ENCODE measurements at regions of chr11 and their contacts with region 1.

Region 1: DNA sequence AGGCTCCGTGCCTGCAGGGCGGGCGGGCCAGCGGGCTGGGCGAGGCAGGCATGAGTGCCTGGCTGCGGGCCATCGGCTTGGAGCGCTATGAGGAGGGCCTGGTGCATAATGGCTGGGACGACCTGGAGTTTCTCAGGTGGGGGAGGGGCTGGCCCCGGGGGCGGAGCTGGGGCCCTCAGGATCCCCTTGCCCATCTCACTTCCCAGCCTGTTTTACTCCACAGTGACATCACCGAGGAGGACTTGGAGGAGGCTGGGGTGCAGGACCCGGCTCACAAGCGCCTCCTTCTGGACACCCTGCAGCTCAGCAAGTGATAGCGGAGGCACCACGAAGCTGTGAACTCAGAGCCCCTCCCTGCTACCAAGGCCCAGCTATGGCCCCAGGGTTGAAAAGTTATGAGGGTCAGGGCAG is 5.9 kb downstream of the PHOX2A start:
- DNase-seq: peak; percentile 58
- ATAC-seq: peak; percentile 55
- H3K4me3 Mint-ChIP-seq: no peak overlapping the region
- H3K27ac Mint-ChIP-seq: no peak overlapping the region
- H3K4me1 Mint-ChIP-seq: peaks cover 20% of the 10 kb centered on the region
- H3K27me3 Mint-ChIP-seq: peaks cover 35% of the 10 kb centered on the region

Region 2: DNA sequence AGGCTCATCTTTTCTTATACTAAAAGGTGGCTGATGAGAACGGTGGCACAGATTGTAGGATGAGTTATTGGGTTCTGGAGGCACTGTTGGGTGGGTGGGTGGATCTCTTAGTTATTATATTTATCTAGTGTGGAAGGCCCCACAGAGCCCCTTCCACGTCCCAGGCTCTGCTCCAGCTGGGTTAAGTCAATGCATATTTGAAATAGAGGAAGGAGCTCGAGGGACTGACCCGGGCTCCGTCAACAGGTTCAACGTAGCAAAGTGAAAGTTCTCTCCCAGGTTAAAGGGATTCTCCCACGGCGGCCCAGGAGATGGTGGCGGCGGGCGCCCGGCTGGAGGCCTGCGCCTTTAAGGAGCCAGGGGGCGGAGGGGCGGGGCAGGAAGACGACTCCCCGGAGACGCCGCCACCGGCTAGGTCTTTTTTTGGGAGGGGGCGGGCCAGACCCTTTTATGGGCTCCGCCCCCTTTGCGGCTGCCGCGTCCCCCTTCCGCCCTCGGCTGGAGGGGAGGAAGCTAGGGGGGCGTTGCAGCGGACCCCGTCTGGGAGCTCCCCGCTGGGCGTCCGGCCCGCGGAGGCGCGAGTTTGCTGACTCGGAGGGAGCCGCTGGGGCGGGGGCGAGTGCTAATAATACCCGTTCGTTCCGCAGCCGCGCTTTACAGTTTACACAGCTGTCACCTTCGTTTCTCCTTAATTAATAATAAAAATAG is 15.0 kb before region 1 on chr11:
- CTCF ChIA-PET with region 1: interaction called, 21 read pairs
- POLR2A ChIA-PET with region 1: interaction called, 7 read pairs
- DNase-seq: peak; percentile 96
- ATAC-seq: peak; percentile 80
- H3K4me3 Mint-ChIP-seq: peak overlapping the region; percentile 85
- H3K27ac Mint-ChIP-seq: peak overlapping the region; percentile 81
- H3K4me1 Mint-ChIP-seq: peaks cover 44% of the 10 kb centered on the region
- H3K27me3 Mint-ChIP-seq: peaks cover 4% of the 10 kb centered on the region

Measured in activated CD8-positive, alpha-beta T cell treated with anti-CD3 and anti-CD28 coated beads, Interleukin-2, amount 10 ng/mL, durations not matched to agents 7 days and 5 days (primary cell).